HepG2 (cell line): ENCODE measurements at regions of chr11 and their contacts with region 1.

Region 1: DNA sequence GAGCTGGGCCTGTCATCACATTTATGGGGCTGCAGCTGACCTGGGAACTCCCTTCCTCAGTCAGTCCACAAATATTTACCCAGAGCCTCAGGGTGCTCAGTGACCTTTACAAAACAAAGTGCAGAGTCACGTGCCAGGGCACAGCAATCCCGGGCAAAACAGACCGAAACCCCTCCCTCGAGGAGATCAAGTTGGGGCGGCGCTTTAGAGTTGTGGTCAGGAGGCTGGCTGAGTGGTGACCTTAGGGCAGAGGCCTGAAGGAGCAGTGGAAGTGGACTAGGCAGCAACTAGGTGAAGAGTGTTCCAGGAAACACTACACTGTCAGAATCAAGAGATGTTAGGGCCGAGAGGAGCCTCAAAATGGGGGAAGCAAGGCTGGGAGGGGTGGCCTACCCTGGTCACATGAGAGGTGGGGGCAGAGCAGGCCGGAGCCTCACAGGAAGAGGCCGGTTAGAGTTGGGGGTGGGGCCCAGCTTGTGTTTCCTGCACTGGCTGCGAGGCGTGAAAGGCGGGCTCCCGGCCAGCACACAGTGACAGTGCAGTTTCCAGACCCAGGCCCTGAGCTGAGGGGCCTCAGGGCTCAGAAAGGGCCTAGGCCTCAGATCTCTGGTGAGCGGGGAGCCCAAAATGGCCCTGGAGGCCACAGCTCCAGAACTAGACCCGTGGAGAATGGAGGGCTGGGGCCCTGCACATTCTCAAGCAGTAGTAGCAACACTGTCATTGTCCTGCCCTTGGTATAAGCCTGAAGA is 3.7 kb upstream of the NEAT1 start:
- DNase-seq: peak; percentile 99
- ATAC-seq: peak; percentile 52
- H3K4me3 ChIP-seq: peak overlapping the region; percentile 66 to 87 (median 70)
- H3K27ac ChIP-seq: peak overlapping the region; percentile 100
- H3K4me1 ChIP-seq: peaks cover 67% of the 10 kb centered on the region
- H3K27me3 ChIP-seq: no peaks in the 10 kb centered on the region; a peak in 1 of 5 replicates
- CTCF ChIP-seq: no peak
- EP300 ChIP-seq: peak; percentile 14 to 87; a peak in 3 of 4 replicates
- POLR2A ChIP-seq: peak in 1 of 2 experiments; percentile 92; a peak in 2 of 4 replicates
- RAD21 ChIP-seq: peak; percentile 56

Region 2: DNA sequence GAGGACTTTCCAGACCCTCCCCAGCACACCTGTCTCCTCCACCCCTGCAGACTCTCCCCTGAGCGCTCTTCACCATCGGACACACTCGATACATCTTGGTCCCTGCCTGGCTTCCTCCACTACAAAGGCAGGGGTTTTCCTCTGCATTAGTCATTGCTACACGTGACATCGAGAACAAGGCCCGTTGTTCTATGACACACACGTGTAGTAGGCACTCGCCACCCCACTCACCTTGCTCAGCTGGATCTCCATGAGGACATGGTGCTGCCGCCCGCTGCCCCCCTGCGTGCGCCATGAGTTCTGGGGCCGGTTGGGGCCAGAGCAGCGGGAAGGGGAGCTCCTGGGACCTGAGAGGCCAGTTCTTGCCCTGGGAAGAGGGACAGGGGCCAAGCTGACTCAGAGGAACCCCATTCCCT is 518.6 kb before region 1 on chr11:
- CTCF ChIA-PET with region 1: no interaction called
- POLR2A ChIA-PET with region 1: no interaction called
- in situ Hi-C with region 1: no loop called
- intact Hi-C with region 1: no loop called
- DNase-seq: no peak
- ATAC-seq: no peak
- H3K4me3 ChIP-seq: no peak overlapping the region
- H3K27ac ChIP-seq: no peak overlapping the region
- H3K4me1 ChIP-seq: no peaks in the 10 kb centered on the region
- H3K27me3 ChIP-seq: no peaks in the 10 kb centered on the region
- CTCF ChIP-seq: no peak
- EP300 ChIP-seq: no peak
- POLR2A ChIP-seq: no peak
- RAD21 ChIP-seq: no peak

Region 3: DNA sequence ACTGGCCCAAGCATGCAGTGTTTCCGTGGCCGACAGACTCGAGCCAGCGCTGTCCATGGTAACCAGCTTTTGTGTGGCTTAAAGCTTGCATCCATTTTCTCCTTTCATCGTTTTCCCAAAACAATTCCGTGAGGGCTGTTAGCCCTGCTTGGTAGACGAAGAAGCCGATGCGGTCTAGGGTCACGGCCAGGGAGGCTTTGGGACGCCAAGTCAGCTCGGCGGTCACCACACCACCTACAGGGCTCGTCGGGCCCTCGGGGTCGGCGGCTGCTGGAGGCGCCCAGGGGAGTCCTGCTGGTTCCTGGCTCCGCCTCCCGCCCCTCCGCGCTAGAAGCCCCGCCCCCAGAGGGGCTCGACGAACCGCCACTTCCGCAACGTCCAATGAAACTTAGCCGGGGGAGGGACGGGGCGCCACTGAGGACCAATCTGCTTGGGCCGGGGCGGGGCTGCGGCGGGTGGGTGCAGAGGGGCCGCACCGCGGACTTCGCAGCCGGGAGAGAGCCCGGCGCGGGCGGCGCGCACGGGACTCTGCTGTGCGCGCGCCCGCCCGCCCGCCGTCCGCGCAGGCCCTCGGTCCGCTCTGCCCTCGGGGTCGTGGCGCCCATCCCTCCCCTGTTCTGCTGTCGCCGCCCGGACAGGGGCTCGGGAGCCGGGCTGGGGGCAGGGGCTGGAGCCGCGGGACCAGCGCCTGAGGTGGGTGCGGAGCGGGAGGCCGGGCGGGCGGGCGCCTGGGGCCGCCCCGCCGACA is 64.4 kb before region 1 on chr11 and contains the start of gene TIGD3:
- CTCF ChIA-PET with region 1: no interaction called
- POLR2A ChIA-PET with region 1: interaction called, 87 read pairs
- in situ Hi-C with region 1: no loop called
- intact Hi-C with region 1: no loop called
- DNase-seq: peak; percentile 92
- ATAC-seq: peak; percentile 79
- H3K4me3 ChIP-seq: peak within 1 kb of the TSS; percentile 70 to 82 (median 77)
- H3K27ac ChIP-seq: peak within 1 kb of the TSS; percentile 64
- H3K4me1 ChIP-seq: peaks cover 42% of the 10 kb centered on the region
- H3K27me3 ChIP-seq: no peaks in the 10 kb centered on the region
- CTCF ChIP-seq: peak; percentile 33
- EP300 ChIP-seq: no peak
- POLR2A ChIP-seq: peak; percentile 45 to 92
- RAD21 ChIP-seq: 0 out of 2 replicates have a peak, but pooled peaks have one; percentile 15
- total RNA-seq, gene TIGD3: 4.0 and 4.9 TPM in 2 replicates

Region 4: DNA sequence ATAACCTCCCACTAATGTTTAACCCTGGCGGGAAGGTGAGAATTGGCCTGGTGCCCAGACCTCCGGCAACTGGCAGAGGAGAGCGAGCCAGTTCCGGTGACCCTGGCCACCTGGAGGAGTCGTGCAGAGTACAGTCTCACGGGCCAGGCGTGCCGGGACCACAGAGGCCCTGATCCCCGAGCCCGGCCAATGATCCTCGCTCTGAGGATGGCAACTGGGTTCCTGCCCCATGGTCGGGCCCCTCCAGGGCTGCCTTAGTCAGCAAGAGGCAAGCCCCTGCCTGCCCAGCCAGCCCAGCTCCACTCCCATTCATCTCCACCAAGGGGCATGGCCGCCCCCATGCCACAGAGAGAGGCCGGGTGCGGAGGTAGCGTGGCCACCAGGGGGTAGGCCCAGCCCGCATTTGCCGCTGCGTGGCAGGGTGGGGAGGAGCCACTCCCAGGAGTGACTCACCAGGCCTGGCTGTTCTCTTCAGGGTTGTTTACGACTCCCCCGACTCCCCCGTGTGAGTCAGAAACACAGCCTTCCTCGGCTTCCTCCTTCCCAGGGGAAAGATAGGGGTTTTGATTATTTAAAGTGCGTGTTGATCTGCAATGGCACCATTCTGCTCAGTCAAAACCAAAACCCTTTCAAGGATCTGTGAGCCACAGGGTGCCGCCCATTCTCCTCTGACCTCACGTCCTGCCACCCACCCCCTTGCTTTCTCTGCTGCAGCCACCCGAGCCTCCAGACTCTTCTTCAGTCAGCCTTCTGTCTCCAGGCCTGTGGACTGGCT is 36.7 kb before region 1 on chr11 and contains the start of gene SLC25A45:
- CTCF ChIA-PET with region 1: no interaction called
- POLR2A ChIA-PET with region 1: interaction called, 433 read pairs
- in situ Hi-C with region 1: loop called (anchors 5 kb)
- intact Hi-C with region 1: loop called (anchors 2 kb)
- DNase-seq: peak; percentile 87
- ATAC-seq: peak; percentile 80
- H3K4me3 ChIP-seq: peak within 1 kb of the TSS; percentile 57 to 82 (median 65)
- H3K27ac ChIP-seq: peak within 1 kb of the TSS; percentile 88
- H3K4me1 ChIP-seq: peaks cover 89% of the 10 kb centered on the region
- H3K27me3 ChIP-seq: no peaks in the 10 kb centered on the region; a peak in 1 of 5 replicates
- CTCF ChIP-seq: peak; percentile 94
- EP300 ChIP-seq: peak in 1 of 2 experiments; percentile 76; a peak in 2 of 4 replicates
- POLR2A ChIP-seq: peak in 1 of 2 experiments; percentile 84; a peak in 2 of 4 replicates
- RAD21 ChIP-seq: peak; percentile 95
- total RNA-seq, gene SLC25A45: 2.1 and 3.4 TPM in 2 replicates

Region 5: DNA sequence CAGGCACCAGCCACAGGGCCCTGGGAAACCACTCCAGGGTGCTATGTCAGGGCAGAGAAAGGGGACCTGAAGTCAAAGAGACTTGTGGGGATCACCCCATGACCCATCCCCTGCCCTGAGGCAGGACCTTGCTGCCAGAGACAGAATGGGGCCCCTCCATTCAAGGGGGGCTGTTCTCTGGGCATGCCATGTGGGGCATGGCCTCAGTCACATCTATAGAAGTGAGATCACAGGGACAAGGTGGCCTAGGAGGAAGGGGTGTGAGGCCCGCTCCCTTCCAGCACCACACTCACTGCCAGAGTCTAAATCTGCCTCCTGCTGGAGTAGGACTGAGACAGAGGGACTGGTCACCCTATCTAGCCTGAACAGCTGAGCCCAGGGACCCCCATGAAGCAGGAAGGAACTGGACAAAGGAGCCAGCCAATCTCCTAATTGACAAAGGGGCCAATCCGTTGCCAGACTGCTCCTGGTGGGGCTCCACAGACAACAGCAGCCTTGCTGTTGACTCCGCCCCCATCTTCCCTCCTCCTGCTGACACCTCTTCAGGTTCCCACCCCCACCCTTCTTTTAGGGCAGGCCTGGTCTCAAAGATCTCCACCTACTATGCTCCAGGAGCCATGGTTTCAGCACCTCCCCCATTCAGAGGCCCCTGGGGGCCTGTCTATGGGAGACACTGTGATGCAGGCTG is 29.7 kb after region 1 on chr11:
- CTCF ChIA-PET with region 1: no interaction called
- POLR2A ChIA-PET with region 1: interaction called, 89 read pairs
- in situ Hi-C with region 1: no loop called
- intact Hi-C with region 1: no loop called
- DNase-seq: no peak
- ATAC-seq: peak; percentile 18
- H3K4me3 ChIP-seq: no peak overlapping the region
- H3K27ac ChIP-seq: no peak overlapping the region
- H3K4me1 ChIP-seq: peaks cover 48% of the 10 kb centered on the region
- H3K27me3 ChIP-seq: no peaks in the 10 kb centered on the region
- CTCF ChIP-seq: no peak
- EP300 ChIP-seq: no peak
- POLR2A ChIP-seq: peak in 1 of 2 experiments; percentile 50; a peak in 1 of 4 replicates
- RAD21 ChIP-seq: no peak

Region 6: DNA sequence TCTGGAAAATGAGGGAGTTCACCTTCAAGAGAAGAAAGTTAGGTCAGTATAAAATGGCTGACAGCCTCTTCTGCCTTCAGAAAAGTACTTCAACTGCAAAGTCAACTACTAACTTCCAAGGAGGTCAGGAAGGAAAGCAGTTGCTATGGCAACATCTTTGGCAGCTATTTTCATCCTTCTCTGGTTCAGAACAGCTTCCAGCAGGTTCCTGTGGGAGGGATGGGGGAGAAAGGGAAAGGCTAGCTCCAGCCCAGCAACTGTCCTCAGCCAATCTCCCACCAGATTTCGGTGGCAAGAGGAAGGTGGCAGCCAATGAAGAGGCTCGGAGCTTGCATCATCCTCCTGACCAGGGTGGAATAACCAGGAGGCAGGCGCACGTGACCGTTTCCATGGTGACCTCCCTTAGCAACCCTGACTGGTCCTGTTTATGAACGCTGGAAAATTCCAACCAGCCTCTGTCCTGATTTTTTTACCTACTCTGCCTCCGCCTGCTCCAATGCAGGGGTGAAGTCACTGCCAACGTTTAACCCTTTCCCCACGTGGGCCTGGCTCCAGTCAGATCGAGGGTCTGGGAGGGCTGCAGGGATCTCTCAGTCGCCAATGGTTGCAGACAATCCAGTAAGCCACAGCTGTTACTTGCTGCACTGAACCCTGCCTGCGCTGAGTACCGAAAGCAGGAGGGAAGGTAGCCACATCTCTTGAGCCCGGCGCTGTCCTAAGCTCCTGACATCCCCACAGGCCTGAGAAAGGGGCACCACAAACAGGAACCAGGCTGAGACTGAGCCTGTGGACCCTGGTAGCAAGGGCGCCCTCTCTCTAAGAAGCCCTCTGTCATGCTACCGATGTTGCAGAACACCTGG is 68.8 kb after region 1 on chr11:
- CTCF ChIA-PET with region 1: no interaction called
- POLR2A ChIA-PET with region 1: interaction called, 211 read pairs
- in situ Hi-C with region 1: no loop called
- intact Hi-C with region 1: no loop called
- DNase-seq: peak; percentile 99
- ATAC-seq: peak; percentile 64
- H3K4me3 ChIP-seq: peak overlapping the region; percentile 41 to 72 (median 56)
- H3K27ac ChIP-seq: peak overlapping the region; percentile 88
- H3K4me1 ChIP-seq: peaks cover 83% of the 10 kb centered on the region
- H3K27me3 ChIP-seq: no peaks in the 10 kb centered on the region
- CTCF ChIP-seq: peak; percentile 49; the same call in 1 of the 2 replicates
- EP300 ChIP-seq: peak in 1 of 2 experiments; percentile 87; a peak in 2 of 4 replicates
- POLR2A ChIP-seq: peak; percentile 25 to 70; a peak in 2 of 4 replicates
- RAD21 ChIP-seq: peak; percentile 32; the same call in 1 of the 2 replicates

Region 7: DNA sequence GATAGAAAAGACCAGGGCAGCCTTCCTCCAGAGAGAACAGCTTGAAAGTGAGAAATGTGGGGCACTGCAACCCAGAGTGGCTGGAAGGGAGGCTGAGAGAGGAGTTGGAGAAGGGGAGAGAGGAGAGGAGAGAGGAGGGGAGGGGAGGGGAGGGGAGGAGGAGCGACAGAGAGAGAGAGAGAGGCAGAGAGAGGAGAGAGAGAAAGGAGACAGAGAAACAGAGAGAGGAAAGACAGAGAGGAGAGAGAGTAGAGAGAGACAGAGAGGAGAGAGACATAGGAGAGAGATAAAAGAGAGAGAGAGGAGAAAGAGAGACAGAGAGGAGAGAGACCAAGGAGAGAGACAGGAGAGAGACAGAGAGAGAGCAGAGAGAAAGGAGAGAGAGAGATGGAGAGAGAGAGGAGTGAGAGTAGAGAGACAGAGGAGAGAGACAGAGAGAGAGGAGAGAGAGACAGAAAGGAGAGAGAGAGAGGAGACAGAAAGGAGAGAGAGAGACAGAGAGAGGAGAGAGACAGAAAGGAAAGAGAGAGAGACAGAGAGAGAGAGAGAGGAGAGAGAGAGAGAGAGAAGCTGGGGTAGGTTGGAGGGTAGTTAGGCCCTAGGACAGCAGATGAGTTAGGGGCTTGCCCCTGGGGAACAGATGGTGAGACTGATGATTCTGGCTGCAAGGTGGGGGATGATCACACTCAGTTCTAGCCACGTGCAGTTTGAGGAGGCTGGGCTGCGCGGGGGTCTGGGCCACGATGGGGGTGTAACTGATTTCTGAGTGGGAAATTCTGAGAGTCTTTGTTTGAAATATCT is 97.5 kb after region 1 on chr11:
- CTCF ChIA-PET with region 1: interaction called, 20 read pairs
- POLR2A ChIA-PET with region 1: interaction called, 7 read pairs
- in situ Hi-C with region 1: no loop called
- intact Hi-C with region 1: loop called (anchors 5 kb)
- DNase-seq: no peak
- ATAC-seq: peak; percentile 61
- H3K4me3 ChIP-seq: no peak overlapping the region
- H3K27ac ChIP-seq: no peak overlapping the region
- H3K4me1 ChIP-seq: peaks cover 19% of the 10 kb centered on the region
- H3K27me3 ChIP-seq: no peaks in the 10 kb centered on the region
- CTCF ChIP-seq: no peak
- EP300 ChIP-seq: no peak
- POLR2A ChIP-seq: no peak
- RAD21 ChIP-seq: no peak

Region 8: GRCh38 chr11:65672186-65672860 is 253.4 kb after region 1 on chr11:
- CTCF ChIA-PET with region 1: no interaction called
- POLR2A ChIA-PET with region 1: no interaction called
- in situ Hi-C with region 1: no loop called
- intact Hi-C with region 1: no loop called
- DNase-seq: no peak
- ATAC-seq: no peak
- H3K4me3 ChIP-seq: no peak overlapping the region
- H3K27ac ChIP-seq: no peak overlapping the region
- H3K4me1 ChIP-seq: no peaks in the 10 kb centered on the region
- H3K27me3 ChIP-seq: no peaks in the 10 kb centered on the region
- CTCF ChIP-seq: no peak
- EP300 ChIP-seq: no peak
- POLR2A ChIP-seq: no peak
- RAD21 ChIP-seq: no peak

Region 9: GRCh38 chr11:65720237-65720934 is 301.5 kb after region 1 on chr11 and contains the start of gene RNASEH2C:
- CTCF ChIA-PET with region 1: no interaction called
- POLR2A ChIA-PET with region 1: no interaction called
- in situ Hi-C with region 1: no loop called
- intact Hi-C with region 1: no loop called
- DNase-seq: peak; percentile 65
- ATAC-seq: peak; percentile 92
- H3K4me3 ChIP-seq: peak within 1 kb of the TSS; percentile 76 to 89 (median 87)
- H3K27ac ChIP-seq: peak within 1 kb of the TSS; percentile 47
- H3K4me1 ChIP-seq: peaks cover 26% of the 10 kb centered on the region
- H3K27me3 ChIP-seq: no peaks in the 10 kb centered on the region; a peak in 1 of 5 replicates
- CTCF ChIP-seq: peak; percentile 20; the same call in 1 of the 2 replicates
- EP300 ChIP-seq: no peak
- POLR2A ChIP-seq: peak in 1 of 2 experiments; percentile 81; a peak in 2 of 4 replicates
- RAD21 ChIP-seq: peak; percentile 42
- total RNA-seq, gene RNASEH2C: 50.9 and 65.1 TPM in 2 replicates

Region 10: GRCh38 chr11:65810046-65810868 is 391.4 kb after region 1 on chr11:
- CTCF ChIA-PET with region 1: no interaction called
- POLR2A ChIA-PET with region 1: no interaction called
- in situ Hi-C with region 1: no loop called
- intact Hi-C with region 1: no loop called
- DNase-seq: peak; percentile 27
- ATAC-seq: peak; percentile 66
- H3K4me3 ChIP-seq: no peak overlapping the region
- H3K27ac ChIP-seq: no peak overlapping the region
- H3K4me1 ChIP-seq: no peaks in the 10 kb centered on the region
- H3K27me3 ChIP-seq: peaks cover 11 to 60% of the 10 kb centered on the region in 2 experiments; a peak in 4 of 5 replicates
- CTCF ChIP-seq: peak; percentile 56
- EP300 ChIP-seq: no peak
- POLR2A ChIP-seq: no peak; a peak in 1 of 4 replicates
- RAD21 ChIP-seq: no peak